Prostate gland (tissue), 2 donors: ENCODE measurements at regions of chr22 and their contacts with region 1.

Region 1: DNA sequence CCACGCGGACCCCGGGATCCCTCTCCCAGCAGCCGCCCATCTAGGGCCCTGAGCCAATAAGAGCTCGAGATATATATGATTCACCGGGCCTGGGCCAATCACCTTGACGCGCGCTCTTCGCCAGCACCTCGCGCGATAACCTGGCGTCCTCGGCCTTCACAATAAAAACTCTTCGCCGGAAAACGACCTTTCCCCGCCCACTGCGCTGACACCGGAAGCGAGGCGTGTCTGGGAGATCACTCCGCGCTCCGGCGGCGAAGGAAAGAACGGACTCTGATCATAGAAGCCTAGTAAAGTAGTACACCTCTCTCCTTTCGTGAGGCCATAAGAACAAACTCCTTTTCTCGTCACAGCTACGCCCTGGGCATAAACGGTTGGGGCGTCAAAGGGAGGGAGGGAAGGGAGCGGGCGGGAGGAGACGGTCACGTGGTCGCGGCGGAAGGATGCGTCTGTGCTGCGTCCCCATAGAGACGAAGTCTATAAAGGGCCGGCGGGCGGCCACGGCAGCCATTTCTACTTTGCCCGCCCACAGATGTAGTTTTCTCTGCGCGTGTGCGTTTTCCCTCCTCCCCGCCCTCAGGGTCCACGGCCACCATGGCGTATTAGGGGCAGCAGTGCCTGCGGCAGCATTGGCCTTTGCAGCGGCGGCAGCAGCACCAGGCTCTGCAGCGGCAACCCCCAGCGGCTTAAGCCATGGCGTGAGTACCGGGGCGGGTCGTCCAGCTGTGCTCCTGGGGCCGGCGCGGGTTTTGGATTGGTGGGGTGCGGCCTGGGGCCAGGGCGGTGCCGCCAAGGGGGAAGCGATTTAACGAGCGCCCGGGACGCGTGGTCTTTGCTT is at the start of gene ATF4:
- DNase-seq: peak; percentile 98
- H3K4me3 ChIP-seq: peak within 1 kb of the TSS; percentile 100
- H3K27ac ChIP-seq: peak within 1 kb of the TSS; percentile 100
- H3K4me1 ChIP-seq: peaks cover 17% of the 10 kb centered on the region
- H3K27me3 ChIP-seq: no peaks in the 10 kb centered on the region
- CTCF ChIP-seq: no peak
- POLR2A ChIP-seq: peak; percentile 94
- total RNA-seq, gene ATF4: 294 to 334 TPM

Region 2: GRCh38 chr22:39343259-39344048 is 176.8 kb before region 1 on chr22:
- intact Hi-C with region 1: loop called (anchors 10 kb)
- DNase-seq: peak; percentile 76
- H3K4me3 ChIP-seq: no peak overlapping the region
- H3K27ac ChIP-seq: peak overlapping the region in 1 of 2 donors; percentile 17
- H3K4me1 ChIP-seq: peaks cover 3% of the 10 kb centered on the region
- H3K27me3 ChIP-seq: no peaks in the 10 kb centered on the region
- CTCF ChIP-seq: peak in 3 of 4 experiments; percentile 53 to 73 (median 70)
- POLR2A ChIP-seq: no peak

Region 3: GRCh38 chr22:39439170-39439569 is 81.1 kb before region 1 on chr22:
- intact Hi-C with region 1: no loop called
- DNase-seq: no peak
- H3K4me3 ChIP-seq: no peak overlapping the region
- H3K27ac ChIP-seq: no peak overlapping the region
- H3K4me1 ChIP-seq: no peaks in the 10 kb centered on the region
- H3K27me3 ChIP-seq: no peaks in the 10 kb centered on the region
- CTCF ChIP-seq: no peak
- POLR2A ChIP-seq: no peak